Right cardiac atrium (tissue), 5 donors: ENCODE measurements at regions of chr4 and their contacts with region 1.

Region 1: DNA sequence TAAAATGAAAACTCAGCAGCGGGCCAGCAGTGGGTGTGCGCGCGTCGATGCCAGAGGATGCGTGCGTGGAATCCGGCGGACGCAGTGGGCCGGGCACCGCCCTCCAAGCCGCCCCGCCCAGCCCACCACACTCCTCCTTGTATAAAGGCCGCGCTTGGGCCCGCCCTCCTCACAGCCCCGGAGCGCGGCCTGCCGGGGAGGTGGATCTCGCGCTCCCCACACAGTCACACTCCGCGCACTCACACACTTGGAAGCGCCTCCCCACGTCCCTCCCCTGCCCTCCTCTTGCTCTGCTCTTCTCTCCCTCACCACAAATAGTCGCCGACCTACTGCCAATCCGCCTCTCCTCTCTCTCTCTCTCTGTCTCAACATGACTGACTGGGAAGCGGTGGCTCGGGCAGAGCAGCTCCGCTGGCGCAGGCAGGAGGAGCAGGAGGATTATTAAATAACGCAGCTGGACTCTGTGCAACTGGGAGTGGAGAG is at the start of gene CCSER1:
- DNase-seq: peak; percentile 83 to 93 (median 92)
- ATAC-seq: peak; percentile 98 to 99
- H3K4me3 ChIP-seq: peak within 1 kb of the TSS; percentile 53
- H3K27ac ChIP-seq: peak within 1 kb of the TSS; percentile 51
- H3K4me1 ChIP-seq: no peaks in the 10 kb centered on the region
- H3K27me3 ChIP-seq: no peaks in the 10 kb centered on the region
- total RNA-seq, gene CCSER1: 9.8 to 12.9 (median 10.6) TPM

Region 2: GRCh38 chr4:90215286-90216039 is 88.2 kb after region 1 on chr4:
- intact Hi-C with region 1: loop called in 1 of 4 experiments (anchors 5 kb)
- DNase-seq: peak in 1 of 3 donors; percentile 25
- ATAC-seq: no peak
- H3K4me3 ChIP-seq: no peak overlapping the region
- H3K27ac ChIP-seq: no peak overlapping the region
- H3K4me1 ChIP-seq: no peaks in the 10 kb centered on the region
- H3K27me3 ChIP-seq: no peaks in the 10 kb centered on the region

Region 3: DNA sequence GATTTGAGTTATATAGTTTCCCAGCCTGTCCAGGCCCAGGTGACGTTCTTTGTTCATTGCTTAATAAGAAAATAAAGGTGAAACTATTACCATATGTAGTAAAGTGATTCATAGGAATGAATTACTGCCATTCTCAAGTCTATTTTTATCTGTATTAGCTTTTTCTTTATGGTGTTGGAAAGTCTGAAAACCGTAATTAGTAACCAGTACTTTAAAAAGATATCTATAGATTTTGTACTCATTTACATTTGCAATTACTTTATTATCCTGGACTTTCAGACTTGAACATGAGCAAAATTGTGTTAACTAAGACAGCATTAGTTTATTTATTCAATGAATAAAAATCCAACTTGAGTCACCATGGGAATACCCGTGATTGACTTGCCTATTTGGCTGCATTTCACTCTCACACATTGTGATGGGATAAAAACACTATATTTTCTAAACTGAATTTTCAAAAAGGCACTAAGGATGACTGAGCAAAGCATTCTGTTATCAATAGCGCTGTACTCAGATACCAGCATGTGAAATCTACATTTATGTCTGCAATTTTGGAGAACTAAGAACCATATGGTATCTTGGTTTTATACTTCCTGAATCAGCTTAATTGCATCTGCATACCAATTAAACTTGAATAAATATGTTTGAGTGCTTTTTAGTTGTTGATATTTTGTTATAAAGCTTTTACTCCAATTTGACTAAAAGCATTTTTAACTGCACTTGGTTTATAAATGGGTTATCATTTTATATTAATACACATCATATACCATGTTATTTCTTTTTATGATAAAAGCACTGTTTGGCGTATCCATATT is 154.5 kb after region 1 on chr4:
- intact Hi-C with region 1: loop called in 2 of 4 experiments (anchors 5 to 10 kb)
- DNase-seq: no peak
- ATAC-seq: no peak
- H3K4me3 ChIP-seq: no peak overlapping the region
- H3K27ac ChIP-seq: no peak overlapping the region
- H3K4me1 ChIP-seq: no peaks in the 10 kb centered on the region
- H3K27me3 ChIP-seq: no peaks in the 10 kb centered on the region